ENCODE measurements at regions of chr14 and their contacts with region 1.

Region 1: DNA sequence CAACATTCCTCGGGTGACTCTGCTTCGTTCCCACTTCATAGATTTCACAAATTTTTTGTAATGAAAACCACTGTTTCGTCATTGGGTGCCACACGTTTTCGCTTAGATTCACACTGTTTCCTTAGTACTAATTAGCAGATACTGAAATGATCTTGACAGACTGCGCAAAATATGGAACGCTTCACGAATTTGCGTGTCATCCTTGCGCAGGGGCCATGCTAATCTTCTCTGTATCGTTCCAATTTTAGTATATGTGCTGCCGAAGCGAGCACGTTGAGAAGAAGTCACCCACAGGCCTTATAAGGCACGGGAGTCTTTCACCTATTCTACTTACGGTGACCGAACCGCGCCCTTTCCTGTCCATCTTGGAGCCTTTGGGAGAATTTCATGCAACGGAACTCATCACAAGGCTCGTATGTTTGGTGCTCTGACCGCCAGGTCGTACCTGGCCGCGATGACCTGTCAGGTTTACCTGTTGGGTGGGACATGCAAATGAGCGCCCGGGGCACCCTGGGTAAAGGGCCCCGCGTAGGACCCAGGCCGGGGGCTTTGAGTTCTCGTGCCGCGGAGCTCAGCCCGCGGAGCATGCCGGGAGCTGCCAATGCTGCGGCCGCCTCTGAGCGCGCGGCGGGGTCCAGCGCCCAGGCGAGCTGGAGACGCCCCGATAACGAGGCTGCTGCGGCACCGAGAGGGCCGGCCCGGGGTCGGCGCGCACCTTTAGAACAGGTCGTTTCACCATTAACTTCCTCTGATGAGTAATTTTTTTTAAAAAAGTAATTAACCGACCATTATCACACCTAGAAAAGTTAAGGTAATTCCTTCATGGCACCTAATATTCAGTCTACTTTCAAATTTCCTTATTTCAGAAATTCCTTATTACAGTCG is at the start of gene RNU6-8:
- DNase-seq: peak; percentile 89
- H3K4me3 Mint-ChIP-seq: peak within 1 kb of the TSS; percentile 89
- H3K27ac Mint-ChIP-seq: peak within 1 kb of the TSS; percentile 98
- H3K4me1 Mint-ChIP-seq: peaks cover 46% of the 10 kb centered on the region
- H3K27me3 Mint-ChIP-seq: peaks cover 2% of the 10 kb centered on the region
- total RNA-seq, gene RNU6-8: not detected

Region 2: DNA sequence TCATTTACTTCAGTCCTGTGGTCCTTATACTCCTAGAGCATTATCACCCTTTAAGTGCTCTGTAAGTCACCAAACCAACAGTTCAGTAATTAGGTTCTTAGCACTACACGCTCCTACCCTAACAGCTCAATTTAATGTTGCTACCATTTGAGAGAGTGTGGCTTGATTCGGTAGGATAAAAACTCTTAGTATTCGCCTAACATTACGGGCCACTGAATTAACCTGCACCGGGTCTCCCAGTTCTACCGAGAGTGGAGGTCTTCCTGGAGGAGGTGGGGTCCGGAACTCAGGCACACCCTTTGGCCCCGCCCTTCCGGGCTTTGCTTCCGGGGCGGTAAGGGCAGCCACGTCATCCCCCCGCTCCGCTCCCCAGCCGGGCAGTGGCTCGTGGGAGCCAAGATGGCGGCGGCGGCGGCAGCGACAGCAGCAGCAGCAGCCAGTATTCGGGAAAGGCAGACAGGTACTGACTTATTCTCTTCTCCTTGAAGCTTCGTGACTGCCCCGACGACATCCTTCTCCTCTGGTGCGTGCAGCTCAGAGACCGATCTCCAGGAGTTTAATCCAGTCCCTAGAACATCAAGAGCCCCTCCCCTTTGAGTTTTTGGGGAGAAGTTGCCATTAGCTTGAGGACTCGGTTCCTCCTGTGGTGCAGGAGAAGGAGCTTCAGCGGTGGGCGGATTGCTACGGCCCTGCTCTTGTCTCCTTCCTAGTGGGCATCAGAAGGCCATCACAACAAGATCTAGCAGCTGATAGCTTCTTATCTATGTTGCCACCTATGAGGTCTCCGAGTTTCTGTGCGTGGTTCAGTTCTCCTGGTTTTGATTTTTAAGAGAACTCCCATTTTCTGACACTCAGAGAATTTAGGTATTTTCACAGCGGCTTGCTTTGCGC is 1581.1 kb before region 1 on chr14 and contains the start of gene SCFD1:
- CTCF ChIA-PET with region 1: no interaction called
- POLR2A ChIA-PET with region 1: no interaction called
- intact Hi-C with region 1: loop called (anchors 5 kb)
- DNase-seq: peak; percentile 96
- H3K4me3 Mint-ChIP-seq: peak within 1 kb of the TSS; percentile 83
- H3K27ac Mint-ChIP-seq: peak within 1 kb of the TSS; percentile 85
- H3K4me1 Mint-ChIP-seq: peaks cover 36% of the 10 kb centered on the region
- H3K27me3 Mint-ChIP-seq: no peaks in the 10 kb centered on the region
- total RNA-seq, gene SCFD1: 52.6 to 56.5 TPM

Region 3: DNA sequence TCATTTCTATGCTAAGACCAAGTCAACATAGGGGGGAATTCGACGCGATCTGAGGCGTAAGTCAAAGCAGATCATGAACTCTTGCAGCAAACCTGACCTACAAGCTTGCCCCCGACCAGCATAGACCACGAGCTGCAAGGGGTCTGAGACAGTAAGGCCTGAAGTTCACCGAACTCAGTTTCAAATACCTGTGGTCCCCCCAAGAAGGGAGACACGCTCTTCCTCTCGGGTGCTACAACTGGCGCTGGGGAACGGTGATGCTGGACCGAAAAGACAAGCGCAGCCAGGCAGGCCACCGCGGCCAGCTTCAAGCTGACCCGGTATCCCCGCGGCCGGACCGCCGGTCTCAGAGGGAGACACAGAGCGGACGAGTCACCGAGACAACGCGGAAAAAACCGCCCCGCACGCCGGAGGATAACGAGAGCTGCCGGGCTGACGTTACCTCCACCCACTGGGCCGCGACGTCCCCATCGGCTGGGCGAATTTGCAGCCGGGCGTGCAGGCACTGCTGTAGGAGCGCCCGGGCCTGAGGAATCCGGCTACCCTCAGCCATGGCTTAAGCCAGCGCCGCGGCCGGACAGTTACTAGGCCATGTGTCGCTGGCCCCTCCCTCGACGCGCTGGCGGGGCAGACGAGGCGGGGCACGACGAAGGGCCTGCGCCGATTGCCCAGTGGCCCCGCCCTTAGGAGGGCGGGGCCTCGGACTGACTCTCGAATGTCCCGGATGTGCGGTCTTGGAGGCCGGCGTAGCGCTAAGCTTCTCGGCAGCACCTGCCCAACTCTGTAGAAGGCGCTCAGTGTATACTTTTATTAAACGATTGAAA is 746.2 kb before region 1 on chr14 and contains the start of gene DTD2:
- CTCF ChIA-PET with region 1: no interaction called
- POLR2A ChIA-PET with region 1: no interaction called
- intact Hi-C with region 1: loop called (anchors 1 kb)
- DNase-seq: peak; percentile 94
- H3K4me3 Mint-ChIP-seq: peak within 1 kb of the TSS; percentile 95
- H3K27ac Mint-ChIP-seq: peak within 1 kb of the TSS; percentile 79
- H3K4me1 Mint-ChIP-seq: peaks cover 25% of the 10 kb centered on the region
- H3K27me3 Mint-ChIP-seq: no peaks in the 10 kb centered on the region
- total RNA-seq, gene DTD2: 19.1 to 20.2 TPM

Region 4: DNA sequence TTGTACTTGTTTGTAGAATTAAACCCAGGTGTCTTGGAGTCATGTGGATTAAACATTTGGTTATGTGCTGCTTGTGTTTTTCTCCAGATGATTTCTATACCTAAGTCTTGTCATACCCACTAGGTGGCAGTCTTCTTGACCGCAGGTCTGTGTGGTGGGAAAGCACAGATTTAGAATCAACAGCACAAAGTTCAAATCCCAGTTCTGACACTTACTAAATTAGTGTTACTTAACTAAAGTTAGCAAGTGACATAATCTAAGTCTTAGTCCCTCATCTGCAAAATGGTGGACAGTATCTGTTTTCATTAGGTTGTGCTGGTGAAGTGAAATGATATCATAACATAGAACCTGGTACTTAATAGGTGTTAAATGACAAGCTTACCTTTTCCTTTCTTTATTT is 277.1 kb before region 1 on chr14:
- CTCF ChIA-PET with region 1: interaction called, 5 read pairs
- POLR2A ChIA-PET with region 1: no interaction called
- intact Hi-C with region 1: loop called (anchors 2 kb)
- DNase-seq: peak; percentile 21
- H3K4me3 Mint-ChIP-seq: no peak overlapping the region
- H3K27ac Mint-ChIP-seq: no peak overlapping the region
- H3K4me1 Mint-ChIP-seq: peaks cover 17% of the 10 kb centered on the region
- H3K27me3 Mint-ChIP-seq: no peaks in the 10 kb centered on the region

Region 5: GRCh38 chr14:32102152-32102787 is 101.0 kb before region 1 on chr14:
- CTCF ChIA-PET with region 1: no interaction called
- POLR2A ChIA-PET with region 1: no interaction called
- intact Hi-C with region 1: loop called (anchors 1 kb)
- DNase-seq: peak; percentile 27
- H3K4me3 Mint-ChIP-seq: no peak overlapping the region
- H3K27ac Mint-ChIP-seq: peak overlapping the region; percentile 75
- H3K4me1 Mint-ChIP-seq: peaks cover 54% of the 10 kb centered on the region
- H3K27me3 Mint-ChIP-seq: no peaks in the 10 kb centered on the region

Region 6: DNA sequence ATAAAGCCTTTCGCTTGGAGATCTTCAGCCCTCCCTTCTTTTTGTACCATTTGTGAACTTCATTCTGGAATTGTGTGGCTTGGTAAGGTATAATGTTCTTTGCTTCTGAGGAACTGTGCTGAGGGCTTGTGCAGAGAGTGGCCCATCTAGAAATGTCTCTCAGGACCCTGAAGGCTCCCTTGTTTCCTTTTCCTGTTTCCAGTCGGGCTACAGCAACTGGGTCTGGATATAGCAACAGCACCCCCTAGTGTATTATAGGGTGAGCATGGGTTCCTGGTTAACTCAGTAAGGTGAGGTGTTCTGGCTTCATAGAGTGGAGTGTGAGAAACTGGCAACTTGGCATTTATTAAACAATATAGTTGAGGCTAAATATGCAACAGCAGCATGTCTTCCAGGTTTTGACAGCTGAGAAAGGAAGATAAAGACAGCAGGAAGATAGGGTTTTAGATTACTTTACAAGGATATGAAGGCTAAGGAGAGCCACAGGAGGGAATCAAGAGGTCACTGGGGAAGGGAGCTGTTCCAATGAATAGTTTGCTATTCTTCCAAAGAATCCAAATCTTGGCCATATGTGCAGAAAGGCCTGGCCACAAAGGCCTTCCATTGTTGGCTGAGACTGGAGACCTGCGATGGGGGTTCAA is 48.9 kb after region 1 on chr14:
- CTCF ChIA-PET with region 1: interaction called, 9 read pairs
- POLR2A ChIA-PET with region 1: no interaction called
- intact Hi-C with region 1: loop called (anchors 2 kb)
- DNase-seq: peak; percentile 50
- H3K4me3 Mint-ChIP-seq: no peak overlapping the region
- H3K27ac Mint-ChIP-seq: no peak overlapping the region
- H3K4me1 Mint-ChIP-seq: no peaks in the 10 kb centered on the region
- H3K27me3 Mint-ChIP-seq: no peaks in the 10 kb centered on the region

Measured in activated CD4-positive, alpha-beta memory T cell treated with anti-CD3 and anti-CD28 coated beads for 36 hours (primary cell).